H1 (cell line): ENCODE measurements at regions of chr2 and their contacts with region 1.

Region 1: GRCh38 chr2:181426687-181427086 is 30.5 kb upstream of the ITGA4 start:
- DNase-seq: no peak
- H3K4me3 ChIP-seq: no peak overlapping the region
- H3K27ac ChIP-seq: no peak overlapping the region
- H3K4me1 ChIP-seq: no peaks in the 10 kb centered on the region
- H3K27me3 ChIP-seq: no peaks in the 10 kb centered on the region; a peak in 1 of 7 replicates
- CTCF ChIP-seq: no peak
- EP300 ChIP-seq: no peak
- POLR2A ChIP-seq: no peak
- RAD21 ChIP-seq: no peak

Region 2: DNA sequence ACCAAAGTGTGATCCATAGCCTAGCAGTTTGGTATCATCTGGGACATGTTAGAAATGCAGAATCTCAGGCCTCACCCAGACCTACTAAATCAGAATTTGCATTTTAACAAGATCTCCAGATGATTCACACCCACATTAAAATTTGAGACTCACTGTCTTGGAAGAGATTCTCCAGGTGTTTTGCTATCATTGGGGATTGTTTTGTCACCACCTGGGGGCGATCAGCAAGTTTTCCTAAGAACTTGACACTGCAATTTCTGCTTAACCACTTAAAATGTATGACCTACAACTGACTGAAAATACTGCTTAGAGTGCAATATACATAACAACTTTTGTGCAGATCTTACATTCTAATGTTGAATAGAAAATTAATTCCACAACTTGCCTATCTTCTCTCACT is 11.6 kb after region 1 on chr2:
- CTCF ChIA-PET with region 1: interaction called, 13 read pairs
- POLR2A ChIA-PET with region 1: no interaction called
- DNase-seq: no peak
- H3K4me3 ChIP-seq: no peak overlapping the region
- H3K27ac ChIP-seq: no peak overlapping the region
- H3K4me1 ChIP-seq: no peaks in the 10 kb centered on the region; a peak in 1 of 7 replicates
- H3K27me3 ChIP-seq: no peaks in the 10 kb centered on the region
- CTCF ChIP-seq: peak in 2 of 3 experiments; percentile 39 to 47; a peak in 3 of 4 replicates
- EP300 ChIP-seq: no peak
- POLR2A ChIP-seq: no peak
- RAD21 ChIP-seq: peak; percentile 32 to 51; a peak in 3 of 4 replicates

Region 3: DNA sequence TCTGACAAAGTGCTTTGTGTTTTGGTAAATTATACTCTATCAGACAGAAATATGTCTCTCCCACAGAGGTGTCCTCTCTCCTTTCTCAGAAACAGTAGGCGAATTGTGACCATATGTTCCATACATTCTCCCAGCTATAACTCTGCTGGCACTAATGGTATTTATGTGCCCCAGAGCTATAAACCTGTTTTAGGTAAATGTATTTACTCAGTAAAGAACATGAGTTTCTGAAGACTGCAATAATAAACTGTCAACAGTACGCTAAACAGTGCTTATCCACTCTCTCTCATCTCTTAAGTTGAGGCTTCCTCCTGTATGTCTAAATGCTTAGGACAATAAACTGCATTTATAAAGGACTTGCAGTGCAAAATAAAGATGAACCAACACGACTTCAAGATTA is 89.0 kb after region 1 on chr2:
- CTCF ChIA-PET with region 1: no interaction called
- POLR2A ChIA-PET with region 1: no interaction called
- DNase-seq: no peak
- H3K4me3 ChIP-seq: no peak overlapping the region
- H3K27ac ChIP-seq: no peak overlapping the region
- H3K4me1 ChIP-seq: 0 out of 7 replicates have a peak, but pooled peaks cover 0 to 3% (median 0%) of the 10 kb centered on the region in 4 experiments
- H3K27me3 ChIP-seq: no peaks in the 10 kb centered on the region
- CTCF ChIP-seq: no peak
- EP300 ChIP-seq: no peak
- POLR2A ChIP-seq: no peak
- RAD21 ChIP-seq: no peak